CD4-positive, alpha-beta T cell (primary cell): ENCODE measurements at regions of chr19 and their contacts with region 1.

Region 1: DNA sequence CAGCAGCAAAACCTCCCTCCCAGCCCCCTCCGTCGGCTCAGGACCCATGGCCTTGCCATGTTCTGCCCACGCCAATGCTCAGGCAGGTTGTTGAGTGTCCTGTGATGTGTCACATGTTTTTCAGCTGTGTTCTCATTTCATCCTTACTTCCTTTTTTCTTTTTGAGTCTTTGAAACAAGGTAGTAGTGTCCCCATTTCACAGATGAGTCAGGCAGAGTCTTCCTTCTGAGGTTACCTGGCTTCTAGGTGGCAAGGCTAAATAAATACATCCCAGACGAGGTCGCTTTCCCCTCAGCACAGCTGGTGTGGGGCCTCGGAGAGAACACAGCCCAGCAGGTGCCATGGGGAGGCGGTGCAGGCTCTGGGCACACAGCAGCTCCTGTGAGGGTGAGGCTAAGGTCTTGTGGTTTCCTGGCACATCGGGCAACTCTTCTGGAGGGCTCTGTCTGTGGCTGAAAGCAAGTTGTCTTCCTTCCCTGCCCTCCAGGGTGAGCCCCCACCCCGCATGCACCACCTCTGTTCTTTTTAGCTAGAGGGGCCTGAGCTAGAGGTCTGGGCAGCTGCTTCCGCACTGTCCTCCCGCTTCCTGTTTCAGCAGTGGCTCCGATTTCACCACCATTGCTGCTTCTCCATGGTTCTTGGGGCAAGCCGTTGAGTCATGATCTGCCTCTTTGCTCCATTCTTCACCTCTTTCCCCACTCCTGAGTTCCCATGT is 15.1 kb downstream of the PRAM1 start:
- DNase-seq: peak; percentile 46 to 81 (median 62)
- ATAC-seq: peak; percentile 89
- H3K4me3 ChIP-seq: no peak overlapping the region
- H3K4me3 Mint-ChIP-seq: peak overlapping the region; percentile 59
- H3K27ac ChIP-seq: peak overlapping the region; percentile 57 to 64
- H3K27ac Mint-ChIP-seq: peak overlapping the region; percentile 85
- H3K4me1 ChIP-seq: peaks cover 38% of the 10 kb centered on the region
- H3K4me1 Mint-ChIP-seq: peaks cover 46% of the 10 kb centered on the region
- H3K27me3 ChIP-seq: no peaks in the 10 kb centered on the region
- H3K27me3 Mint-ChIP-seq: no peaks in the 10 kb centered on the region
- CTCF ChIP-seq: peak; percentile 60

Region 2: GRCh38 chr19:8444645-8445487 is 42.4 kb before region 1 on chr19 and contains the start of gene HNRNPM:
- CTCF ChIA-PET with region 1: interaction called, 3 read pairs
- POLR2A ChIA-PET with region 1: interaction called, 15 read pairs
- intact Hi-C with region 1: loop called in 1 of 2 experiments (anchors 5 kb)
- DNase-seq: peak; percentile 99 to 100 (median 100)
- ATAC-seq: peak; percentile 94
- H3K4me3 ChIP-seq: peak within 1 kb of the TSS; percentile 97
- H3K4me3 Mint-ChIP-seq: peak within 1 kb of the TSS; percentile 100
- H3K27ac ChIP-seq: peak within 1 kb of the TSS; percentile 86 to 93
- H3K27ac Mint-ChIP-seq: peak within 1 kb of the TSS; percentile 98
- H3K4me1 ChIP-seq: peaks cover 52% of the 10 kb centered on the region
- H3K4me1 Mint-ChIP-seq: peaks cover 47% of the 10 kb centered on the region
- H3K27me3 ChIP-seq: no peaks in the 10 kb centered on the region
- H3K27me3 Mint-ChIP-seq: no peaks in the 10 kb centered on the region
- CTCF ChIP-seq: no peak
- total RNA-seq, gene HNRNPM: 269 to 272 TPM

Region 3: GRCh38 chr19:8451885-8452284 is 35.4 kb before region 1 on chr19:
- CTCF ChIA-PET with region 1: no interaction called
- POLR2A ChIA-PET with region 1: no interaction called
- intact Hi-C with region 1: loop called in 1 of 2 experiments (anchors 5 kb)
- DNase-seq: peak in 3 of 14 experiments; percentile 13 to 48 (median 37)
- ATAC-seq: peak; percentile 62
- H3K4me3 ChIP-seq: no peak overlapping the region
- H3K4me3 Mint-ChIP-seq: peak overlapping the region; percentile 52
- H3K27ac ChIP-seq: no peak overlapping the region
- H3K27ac Mint-ChIP-seq: peak overlapping the region; percentile 37
- H3K4me1 ChIP-seq: peaks cover 81% of the 10 kb centered on the region
- H3K4me1 Mint-ChIP-seq: peaks cover 89% of the 10 kb centered on the region
- H3K27me3 ChIP-seq: no peaks in the 10 kb centered on the region
- H3K27me3 Mint-ChIP-seq: no peaks in the 10 kb centered on the region
- CTCF ChIP-seq: no peak

Region 4: GRCh38 chr19:8505680-8506401 is 18.5 kb after region 1 on chr19:
- CTCF ChIA-PET with region 1: interaction called, 6 read pairs
- POLR2A ChIA-PET with region 1: interaction called, 23 read pairs
- intact Hi-C with region 1: no loop called
- DNase-seq: peak; percentile 47 to 86 (median 67)
- ATAC-seq: peak; percentile 77
- H3K4me3 ChIP-seq: peak overlapping the region; percentile 75
- H3K4me3 Mint-ChIP-seq: peak overlapping the region; percentile 93
- H3K27ac ChIP-seq: peak overlapping the region; percentile 5 to 46
- H3K27ac Mint-ChIP-seq: peak overlapping the region; percentile 85
- H3K4me1 ChIP-seq: peaks cover 40% of the 10 kb centered on the region
- H3K4me1 Mint-ChIP-seq: peaks cover 22% of the 10 kb centered on the region
- H3K27me3 ChIP-seq: no peaks in the 10 kb centered on the region
- H3K27me3 Mint-ChIP-seq: no peaks in the 10 kb centered on the region
- CTCF ChIP-seq: peak; percentile 73

Region 5: GRCh38 chr19:8569066-8569771 is 81.9 kb after region 1 on chr19:
- CTCF ChIA-PET with region 1: no interaction called
- POLR2A ChIA-PET with region 1: interaction called, 14 read pairs
- intact Hi-C with region 1: no loop called
- DNase-seq: peak in 13 of 14 experiments; percentile 51 to 91 (median 64)
- ATAC-seq: peak; percentile 75
- H3K4me3 ChIP-seq: peak overlapping the region; percentile 32
- H3K4me3 Mint-ChIP-seq: peak overlapping the region; percentile 76
- H3K27ac ChIP-seq: peak overlapping the region; percentile 59 to 79
- H3K27ac Mint-ChIP-seq: peak overlapping the region; percentile 95
- H3K4me1 ChIP-seq: peaks cover 100% of the 10 kb centered on the region
- H3K4me1 Mint-ChIP-seq: peaks cover 63% of the 10 kb centered on the region
- H3K27me3 ChIP-seq: no peaks in the 10 kb centered on the region
- H3K27me3 Mint-ChIP-seq: no peaks in the 10 kb centered on the region
- CTCF ChIP-seq: no peak